Left colon (tissue), 2 donors: ENCODE measurements at regions of chr11 and their contacts with region 1.

Region 1: GRCh38 chr11:134062265-134063123 is 6.4 kb upstream of the JAM3 start:
- DNase-seq: no peak
- ATAC-seq: no peak

Region 2: GRCh38 chr11:133956650-133957633 is 105.6 kb before region 1 on chr11 and contains the start of gene IGSF9B:
- intact Hi-C with region 1: no loop called
- DNase-seq: peak; percentile 80 to 90
- ATAC-seq: peak; percentile 100
- total RNA-seq, gene IGSF9B: 2.3 to 4.4 TPM

Region 3: DNA sequence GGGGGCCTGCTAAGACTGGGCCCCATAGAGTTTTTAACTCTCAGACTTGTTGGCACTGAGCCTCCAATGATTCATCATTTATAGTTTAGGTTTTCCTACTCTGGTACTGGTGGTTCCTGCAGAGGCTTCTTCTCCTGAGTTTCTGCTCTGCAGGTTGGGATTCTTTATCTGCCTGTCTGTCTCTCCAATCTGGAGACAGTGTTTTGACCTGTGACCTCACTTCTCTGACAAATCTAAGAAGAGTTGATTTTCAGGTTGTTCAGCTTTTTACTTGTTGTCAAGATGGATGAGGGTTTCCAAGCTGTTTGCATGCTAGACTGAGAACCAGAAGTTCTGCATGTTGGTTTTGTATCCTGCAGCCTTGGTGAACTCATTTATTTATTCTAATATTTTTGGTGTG is 70.3 kb after region 1 on chr11:
- intact Hi-C with region 1: loop called in 1 of 2 experiments (anchors 5 kb)
- DNase-seq: no peak
- ATAC-seq: no peak